ENCODE measurements at regions of chr5 and their contacts with region 1.

Region 1: DNA sequence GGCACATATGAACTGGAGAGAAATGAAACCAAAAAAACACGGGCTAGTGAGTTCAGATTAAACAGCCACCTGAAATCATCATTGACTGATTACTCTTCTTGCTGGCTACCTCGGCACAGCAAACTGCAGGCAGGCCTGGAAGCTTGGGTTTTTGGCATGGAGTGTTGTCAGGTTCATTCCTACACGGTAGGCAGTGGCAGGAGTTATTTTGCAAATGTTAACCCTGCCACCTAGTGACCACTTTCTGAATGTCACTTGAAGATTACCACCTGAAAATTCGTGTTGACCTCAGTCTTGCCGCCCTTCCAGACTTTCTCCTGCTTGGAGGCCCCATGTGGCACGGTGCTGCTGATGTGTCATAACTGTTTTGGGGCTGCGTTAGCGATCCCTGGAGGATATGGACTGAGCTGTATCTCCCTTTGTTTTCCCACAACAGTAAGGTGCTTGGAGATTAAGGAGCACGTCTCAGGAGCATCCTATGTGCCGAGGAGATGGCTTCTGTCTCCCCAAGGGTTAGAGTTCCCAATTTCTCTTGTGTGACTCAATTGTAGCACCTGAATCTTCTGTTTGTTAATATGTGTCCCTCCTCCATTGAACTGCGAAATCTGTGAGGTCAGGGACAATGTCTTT is 12.7 kb upstream of the CD180 start:
- DNase-seq: peak; percentile 92
- H3K27ac ChIP-seq: no peak overlapping the region
- CTCF ChIP-seq: peak; percentile 91

Region 2: GRCh38 chr5:67156976-67157583 is 52.2 kb before region 1 on chr5:
- CTCF ChIA-PET with region 1: interaction called, 10 read pairs
- POLR2A ChIA-PET with region 1: no interaction called
- DNase-seq: peak; percentile 67
- H3K27ac ChIP-seq: no peak overlapping the region
- CTCF ChIP-seq: peak; percentile 95

Region 3: DNA sequence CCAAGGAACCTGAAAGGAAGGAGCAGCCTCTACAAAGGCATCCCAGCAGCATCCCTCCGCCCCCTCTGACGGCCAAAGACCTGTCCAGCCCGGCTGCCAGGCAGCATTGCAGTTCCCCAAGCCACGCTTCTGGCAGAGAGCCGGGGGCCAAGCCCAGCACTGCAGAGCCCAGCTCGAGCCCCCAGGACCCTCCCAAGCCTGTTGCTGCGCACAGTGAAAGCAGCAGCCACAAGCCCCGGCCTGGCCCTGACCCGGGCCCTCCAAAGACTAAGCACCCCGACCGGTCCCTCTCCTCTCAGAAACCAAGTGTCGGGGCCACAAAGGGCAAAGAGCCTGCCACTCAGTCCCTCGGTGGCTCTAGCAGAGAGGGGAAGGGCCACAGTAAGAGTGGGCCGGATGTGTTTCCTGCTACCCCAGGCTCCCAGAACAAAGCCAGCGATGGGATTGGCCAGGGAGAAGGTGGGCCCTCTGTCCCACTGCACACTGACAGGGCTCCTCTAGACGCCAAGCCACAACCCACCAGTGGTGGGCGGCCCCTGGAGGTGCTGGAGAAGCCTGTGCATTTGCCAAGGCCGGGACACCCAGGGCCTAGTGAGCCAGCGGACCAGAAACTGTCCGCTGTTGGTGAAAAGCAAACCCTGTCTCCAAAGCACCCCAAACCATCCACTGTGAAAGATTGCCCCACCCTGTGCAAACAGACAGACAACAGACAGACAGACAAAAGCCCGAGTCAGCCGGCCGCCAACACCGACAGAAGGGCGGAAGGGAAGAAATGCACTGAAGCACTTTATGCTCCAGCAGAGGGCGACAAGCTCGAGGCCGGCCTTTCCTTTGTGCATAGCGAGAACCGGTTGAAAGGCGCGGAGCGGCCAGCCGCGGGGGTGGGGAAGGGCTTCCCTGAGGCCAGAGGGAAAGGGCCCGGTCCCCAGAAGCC is 43.5 kb before region 1 on chr5:
- CTCF ChIA-PET with region 1: interaction called, 15 read pairs
- POLR2A ChIA-PET with region 1: no interaction called
- DNase-seq: peak; percentile 48
- H3K27ac ChIP-seq: peak overlapping the region; percentile 52
- CTCF ChIP-seq: peak; percentile 71